HepG2 (cell line): ENCODE measurements at regions of chr5 and their contacts with region 1.

Region 1: GRCh38 chr5:157142317-157143126 is at the start of gene MED7:
- DNase-seq: peak; percentile 97
- ATAC-seq: peak; percentile 100
- H3K4me3 ChIP-seq: peak within 1 kb of the TSS; percentile 91 to 99 (median 99)
- H3K27ac ChIP-seq: peak within 1 kb of the TSS; percentile 93
- H3K4me1 ChIP-seq: peaks cover 10% of the 10 kb centered on the region
- H3K27me3 ChIP-seq: no peaks in the 10 kb centered on the region
- CTCF ChIP-seq: no peak
- EP300 ChIP-seq: no peak
- POLR2A ChIP-seq: peak; percentile 84 to 89
- RAD21 ChIP-seq: no peak
- total RNA-seq, gene MED7: 9.2 and 10.0 TPM in 2 replicates

Region 2: GRCh38 chr5:155943516-155944407 is 1198.8 kb before region 1 on chr5:
- CTCF ChIA-PET with region 1: no interaction called
- POLR2A ChIA-PET with region 1: no interaction called
- in situ Hi-C with region 1: loop called (anchors 25 kb)
- intact Hi-C with region 1: no loop called
- DNase-seq: peak; percentile 31
- ATAC-seq: peak; percentile 92
- H3K4me3 ChIP-seq: no peak overlapping the region
- H3K27ac ChIP-seq: no peak overlapping the region
- H3K4me1 ChIP-seq: no peaks in the 10 kb centered on the region
- H3K27me3 ChIP-seq: no peaks in the 10 kb centered on the region
- CTCF ChIP-seq: peak; percentile 70
- EP300 ChIP-seq: no peak
- POLR2A ChIP-seq: no peak
- RAD21 ChIP-seq: no peak

Region 3: GRCh38 chr5:156686796-156687195 is 455.7 kb before region 1 on chr5:
- CTCF ChIA-PET with region 1: no interaction called
- POLR2A ChIA-PET with region 1: no interaction called
- in situ Hi-C with region 1: loop called (anchors 25 kb)
- intact Hi-C with region 1: loop called (anchors 10 kb)
- DNase-seq: no peak
- ATAC-seq: no peak
- H3K4me3 ChIP-seq: no peak overlapping the region
- H3K27ac ChIP-seq: no peak overlapping the region
- H3K4me1 ChIP-seq: peaks cover 37% of the 10 kb centered on the region
- H3K27me3 ChIP-seq: no peaks in the 10 kb centered on the region
- CTCF ChIP-seq: no peak
- EP300 ChIP-seq: no peak
- POLR2A ChIP-seq: no peak
- RAD21 ChIP-seq: no peak

Region 4: GRCh38 chr5:156824800-156825199 is 317.7 kb before region 1 on chr5:
- CTCF ChIA-PET with region 1: no interaction called
- POLR2A ChIA-PET with region 1: no interaction called
- in situ Hi-C with region 1: loop called (anchors 25 kb)
- intact Hi-C with region 1: no loop called
- DNase-seq: peak; percentile 26
- ATAC-seq: peak; percentile 50; the same call in 2 of the 3 replicates
- H3K4me3 ChIP-seq: no peak overlapping the region
- H3K27ac ChIP-seq: no peak overlapping the region
- H3K4me1 ChIP-seq: no peaks in the 10 kb centered on the region
- H3K27me3 ChIP-seq: no peaks in the 10 kb centered on the region; a peak in 1 of 5 replicates
- CTCF ChIP-seq: peak; percentile 56
- EP300 ChIP-seq: no peak
- POLR2A ChIP-seq: no peak
- RAD21 ChIP-seq: no peak

Region 5: DNA sequence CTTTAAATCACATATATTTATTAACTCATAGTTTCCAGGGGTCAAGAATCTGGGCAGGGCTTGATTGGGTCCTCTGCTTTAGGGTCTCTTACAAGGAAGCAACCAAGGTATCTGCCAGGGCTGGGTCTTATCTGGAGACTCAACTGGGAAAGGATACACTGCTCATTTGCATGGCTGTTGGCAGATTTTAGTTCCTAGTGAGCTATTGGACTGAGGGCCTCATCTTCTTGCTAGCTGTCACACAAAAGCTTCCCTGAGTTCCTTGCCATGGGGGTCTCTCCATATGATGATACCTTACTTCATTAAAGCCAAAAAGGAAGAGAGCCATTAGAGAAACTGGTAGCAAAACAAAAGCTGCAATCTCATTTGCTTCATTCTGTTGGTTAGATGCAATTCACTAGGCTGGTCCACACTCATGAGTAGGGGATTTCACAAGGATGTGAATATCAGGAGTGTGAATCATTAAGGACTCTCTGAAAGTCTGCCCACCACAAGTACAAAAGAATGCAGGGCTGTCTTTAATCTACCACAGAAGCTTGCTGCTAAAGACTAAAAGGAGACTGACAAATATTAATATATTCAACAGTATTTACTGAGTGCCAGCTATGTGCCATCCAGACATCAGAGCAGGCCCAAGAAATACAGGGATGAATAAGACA is 137.5 kb before region 1 on chr5:
- CTCF ChIA-PET with region 1: no interaction called
- POLR2A ChIA-PET with region 1: no interaction called
- in situ Hi-C with region 1: no loop called
- intact Hi-C with region 1: no loop called
- DNase-seq: no peak
- ATAC-seq: no peak
- H3K4me3 ChIP-seq: no peak overlapping the region
- H3K27ac ChIP-seq: no peak overlapping the region
- H3K4me1 ChIP-seq: peaks cover 19% of the 10 kb centered on the region
- H3K27me3 ChIP-seq: no peaks in the 10 kb centered on the region
- CTCF ChIP-seq: no peak
- EP300 ChIP-seq: no peak
- POLR2A ChIP-seq: no peak
- RAD21 ChIP-seq: no peak

Region 6: GRCh38 chr5:157059093-157059539 is 83.4 kb before region 1 on chr5 and contains the start of gene HAVCR1:
- CTCF ChIA-PET with region 1: no interaction called
- POLR2A ChIA-PET with region 1: interaction called, 14 read pairs
- in situ Hi-C with region 1: no loop called
- intact Hi-C with region 1: loop called (anchors 5 kb)
- DNase-seq: peak; percentile 88
- ATAC-seq: peak; percentile 96
- H3K4me3 ChIP-seq: peak within 1 kb of the TSS; percentile 14 to 60 (median 23); a peak in 5 of 6 replicates
- H3K27ac ChIP-seq: peak within 1 kb of the TSS; percentile 80
- H3K4me1 ChIP-seq: peaks cover 67% of the 10 kb centered on the region
- H3K27me3 ChIP-seq: no peaks in the 10 kb centered on the region; a peak in 1 of 5 replicates
- CTCF ChIP-seq: 0 out of 2 replicates have a peak, but pooled peaks have one; percentile 8
- EP300 ChIP-seq: peak in 1 of 2 experiments; percentile 64; a peak in 2 of 4 replicates
- POLR2A ChIP-seq: peak in 1 of 2 experiments; percentile 73; a peak in 2 of 4 replicates
- RAD21 ChIP-seq: no peak
- total RNA-seq, gene HAVCR1: 0.77 and 0.93 TPM in 2 replicates

Region 7: DNA sequence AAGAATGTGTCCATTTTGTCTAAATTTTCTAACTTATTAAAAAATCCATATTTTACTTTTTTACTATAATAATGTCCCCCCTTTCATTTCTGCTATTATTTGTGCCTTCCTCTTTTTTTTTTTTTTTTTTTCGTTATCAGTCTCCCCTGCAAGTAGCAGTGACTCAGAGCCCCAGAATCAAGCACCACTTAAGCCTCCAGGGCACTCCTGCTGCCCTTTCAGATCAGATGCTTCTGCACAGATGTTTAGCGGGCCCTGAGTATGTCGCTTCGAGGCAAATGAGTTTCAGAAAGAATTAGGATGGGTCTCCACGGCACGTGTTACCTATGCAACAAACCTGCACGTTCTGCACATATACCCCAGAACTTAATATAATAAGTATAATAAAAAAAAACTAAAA is 11.6 kb before region 1 on chr5:
- CTCF ChIA-PET with region 1: no interaction called
- POLR2A ChIA-PET with region 1: interaction called, 10 read pairs
- in situ Hi-C with region 1: no loop called
- intact Hi-C with region 1: no loop called
- DNase-seq: no peak
- ATAC-seq: no peak
- H3K4me3 ChIP-seq: no peak overlapping the region
- H3K27ac ChIP-seq: no peak overlapping the region
- H3K4me1 ChIP-seq: peaks cover 24% of the 10 kb centered on the region; the same call in 1 of the 2 replicates
- H3K27me3 ChIP-seq: no peaks in the 10 kb centered on the region
- CTCF ChIP-seq: no peak
- EP300 ChIP-seq: no peak
- POLR2A ChIP-seq: no peak
- RAD21 ChIP-seq: no peak

Region 8: GRCh38 chr5:157312492-157312891 is 170.0 kb after region 1 on chr5:
- CTCF ChIA-PET with region 1: no interaction called
- POLR2A ChIA-PET with region 1: no interaction called
- in situ Hi-C with region 1: loop called (anchors 10 kb)
- intact Hi-C with region 1: no loop called
- DNase-seq: peak; percentile 62
- ATAC-seq: peak; percentile 91
- H3K4me3 ChIP-seq: no peak overlapping the region
- H3K27ac ChIP-seq: no peak overlapping the region
- H3K4me1 ChIP-seq: no peaks in the 10 kb centered on the region
- H3K27me3 ChIP-seq: no peaks in the 10 kb centered on the region
- CTCF ChIP-seq: peak; percentile 85
- EP300 ChIP-seq: no peak
- POLR2A ChIP-seq: no peak
- RAD21 ChIP-seq: peak; percentile 71